Panc1 (cell line): ENCODE measurements at regions of chr5 and their contacts with region 1.

Region 1: DNA sequence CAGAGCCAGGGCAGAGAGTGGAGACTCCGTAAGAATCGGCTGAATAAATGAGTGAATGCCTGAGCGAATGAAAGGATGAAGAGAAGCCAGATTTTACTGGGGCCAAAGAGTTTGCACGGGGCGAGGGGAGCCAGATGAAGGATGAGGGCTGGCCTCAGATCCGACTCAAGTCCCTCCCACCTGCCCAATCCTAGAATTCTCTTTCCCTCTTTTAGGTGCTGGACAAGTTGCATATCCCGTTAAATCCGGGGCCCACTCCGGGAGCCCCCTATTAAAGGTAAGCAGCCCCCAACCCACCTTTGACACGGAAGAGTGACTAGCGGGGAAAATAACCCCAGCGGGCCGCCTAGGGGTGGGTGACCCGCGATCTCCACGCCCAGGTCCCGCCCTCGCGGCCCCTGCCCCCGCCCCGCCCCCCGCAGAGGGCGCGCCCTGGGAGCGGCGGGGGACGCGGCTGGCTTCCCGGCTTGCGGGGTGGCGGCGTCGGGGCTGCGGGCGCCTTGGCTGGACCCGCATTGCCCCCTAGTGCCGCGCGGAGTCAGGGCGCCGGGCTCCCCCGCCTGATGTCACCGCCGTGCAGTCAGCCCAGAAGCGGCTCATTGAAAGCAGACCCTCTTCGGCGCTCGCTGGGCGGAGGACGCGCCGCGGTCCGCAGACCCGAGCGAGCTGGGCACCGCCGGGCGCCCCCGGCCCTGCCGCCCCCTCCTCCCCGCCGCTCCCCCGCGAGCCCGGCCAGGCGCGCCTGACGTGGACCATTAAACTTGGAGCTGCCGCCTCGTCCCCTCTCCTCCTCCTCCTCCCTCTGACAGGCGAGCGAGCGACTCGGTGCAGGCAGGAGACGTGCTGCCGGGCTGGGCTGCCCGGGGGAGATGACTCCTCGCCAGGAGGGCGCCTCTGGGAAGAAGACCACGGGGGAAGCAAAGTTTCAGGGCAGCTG is at the start of gene ADRA1B:
- DNase-seq: no peak
- ATAC-seq: peak; percentile 87
- H3K4me3 ChIP-seq: peak within 1 kb of the TSS; percentile 36 to 66
- H3K27ac ChIP-seq: peak within 1 kb of the TSS; percentile 2
- H3K4me1 ChIP-seq: peaks cover 24% of the 10 kb centered on the region
- H3K27me3 ChIP-seq: no peaks in the 10 kb centered on the region
- CTCF ChIP-seq: peak; percentile 86
- total RNA-seq, gene ADRA1B: 8.3 TPM

Region 2: DNA sequence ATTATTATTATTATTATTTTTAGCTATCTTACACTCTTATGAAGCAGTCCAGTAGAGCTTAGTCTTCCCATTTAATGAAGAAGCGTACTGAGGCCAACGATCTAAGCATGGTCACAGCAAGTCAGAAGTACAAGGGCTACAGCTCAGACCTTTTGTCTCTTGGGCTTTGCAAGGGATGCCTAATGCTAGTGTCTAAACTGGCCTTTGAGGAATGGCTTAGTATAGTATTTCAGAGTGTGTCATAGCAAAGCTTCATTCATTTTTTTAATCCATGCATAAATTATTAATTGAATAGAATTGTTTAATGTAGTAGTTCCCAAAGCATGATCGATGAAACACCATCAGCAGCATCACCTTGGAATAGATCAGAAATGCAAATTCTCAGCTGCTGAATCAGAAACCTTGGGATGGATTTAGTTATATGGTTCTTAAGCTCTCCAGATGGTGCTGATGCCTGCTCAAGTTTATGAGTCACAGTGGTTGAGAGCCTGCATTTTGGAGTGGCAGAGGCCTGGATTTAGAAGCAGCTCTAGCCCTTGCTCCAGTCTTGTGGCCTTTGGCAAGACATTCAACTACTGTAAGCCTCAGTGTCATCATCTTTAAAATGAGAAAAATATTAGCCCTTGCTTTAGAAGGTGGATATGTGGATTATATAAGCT is 591.9 kb before region 1 on chr5:
- CTCF ChIA-PET with region 1: no interaction called
- POLR2A ChIA-PET with region 1: no interaction called
- in situ Hi-C with region 1: no loop called
- intact Hi-C with region 1: loop called (anchors 10 kb)
- DNase-seq: no peak
- ATAC-seq: no peak
- H3K4me3 ChIP-seq: no peak overlapping the region
- H3K27ac ChIP-seq: no peak overlapping the region
- H3K4me1 ChIP-seq: no peaks in the 10 kb centered on the region
- H3K27me3 ChIP-seq: peaks cover 5% of the 10 kb centered on the region; the same call in 1 of the 2 replicates
- CTCF ChIP-seq: no peak

Region 3: GRCh38 chr5:159515909-159516415 is 400.2 kb before region 1 on chr5:
- CTCF ChIA-PET with region 1: no interaction called
- POLR2A ChIA-PET with region 1: no interaction called
- in situ Hi-C with region 1: no loop called
- intact Hi-C with region 1: loop called (anchors 5 kb)
- DNase-seq: no peak
- ATAC-seq: 0 out of 2 replicates have a peak, but pooled peaks have one; percentile 75
- H3K4me3 ChIP-seq: no peak overlapping the region
- H3K27ac ChIP-seq: no peak overlapping the region
- H3K4me1 ChIP-seq: no peaks in the 10 kb centered on the region
- H3K27me3 ChIP-seq: no peaks in the 10 kb centered on the region
- CTCF ChIP-seq: peak; percentile 91

Region 4: GRCh38 chr5:159811712-159812111 is 104.5 kb before region 1 on chr5:
- CTCF ChIA-PET with region 1: no interaction called
- POLR2A ChIA-PET with region 1: no interaction called
- in situ Hi-C with region 1: no loop called
- intact Hi-C with region 1: no loop called
- DNase-seq: no peak
- ATAC-seq: no peak
- H3K4me3 ChIP-seq: no peak overlapping the region
- H3K27ac ChIP-seq: no peak overlapping the region
- H3K4me1 ChIP-seq: no peaks in the 10 kb centered on the region
- H3K27me3 ChIP-seq: no peaks in the 10 kb centered on the region
- CTCF ChIP-seq: no peak

Region 5: DNA sequence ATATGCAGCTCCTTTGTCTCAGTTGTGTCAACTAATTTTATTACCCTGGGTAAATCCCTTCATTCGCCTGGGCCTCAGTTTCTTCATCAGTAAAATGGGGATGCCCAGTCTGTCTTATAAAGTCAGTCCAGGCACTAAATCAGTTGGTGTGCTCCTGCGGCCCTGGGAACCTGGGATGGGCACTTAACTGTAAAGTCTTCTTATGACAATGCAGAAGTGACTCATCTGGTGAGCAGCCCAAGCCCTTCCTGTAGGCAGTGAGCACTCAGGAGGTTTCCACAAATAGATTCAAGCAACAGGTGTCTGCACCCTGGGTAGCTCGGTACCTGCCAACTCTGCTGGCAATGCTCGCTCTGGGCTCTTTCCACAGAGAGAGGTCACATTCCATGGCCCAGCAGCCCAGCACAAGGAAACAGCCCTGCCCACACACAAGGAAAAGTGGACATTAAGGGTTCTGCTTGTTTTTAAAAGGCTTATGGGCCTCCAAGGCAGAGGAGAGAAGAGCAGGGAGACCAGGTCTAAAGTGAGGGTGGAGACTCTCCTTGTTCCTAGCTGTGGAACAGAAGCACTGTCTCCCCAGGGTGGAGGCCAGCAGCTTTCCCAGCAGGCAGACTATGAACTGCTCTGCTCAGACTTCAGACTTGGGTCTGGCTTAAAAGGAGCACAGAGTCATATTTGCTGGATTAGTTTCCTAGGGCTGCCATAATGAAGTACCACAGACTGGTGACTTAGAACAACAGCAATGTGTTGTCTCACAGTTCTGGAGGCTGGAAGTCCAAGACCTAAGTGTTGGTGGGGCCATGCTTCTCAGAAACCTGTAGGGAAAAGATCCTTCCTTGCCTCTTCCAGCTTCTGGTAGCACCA is 89.6 kb before region 1 on chr5:
- CTCF ChIA-PET with region 1: no interaction called
- POLR2A ChIA-PET with region 1: no interaction called
- in situ Hi-C with region 1: no loop called
- intact Hi-C with region 1: loop called (anchors 10 kb)
- DNase-seq: peak; percentile 75
- ATAC-seq: peak; percentile 87
- H3K4me3 ChIP-seq: no peak overlapping the region
- H3K27ac ChIP-seq: peak overlapping the region; percentile 55
- H3K4me1 ChIP-seq: peaks cover 10% of the 10 kb centered on the region
- H3K27me3 ChIP-seq: no peaks in the 10 kb centered on the region
- CTCF ChIP-seq: no peak

Region 6: GRCh38 chr5:160021831-160022446 is 105.8 kb after region 1 on chr5:
- CTCF ChIA-PET with region 1: interaction called, 10 read pairs
- POLR2A ChIA-PET with region 1: interaction called, 3 read pairs
- in situ Hi-C with region 1: no loop called
- intact Hi-C with region 1: no loop called
- DNase-seq: peak; percentile 43
- ATAC-seq: peak; percentile 92
- H3K4me3 ChIP-seq: no peak overlapping the region
- H3K27ac ChIP-seq: no peak overlapping the region
- H3K4me1 ChIP-seq: peaks cover 4% of the 10 kb centered on the region; the same call in 1 of the 2 replicates
- H3K27me3 ChIP-seq: no peaks in the 10 kb centered on the region
- CTCF ChIP-seq: peak; percentile 88